HEK293T (cell line): ENCODE measurements at regions of chr1 and their contacts with region 1.

Region 1: DNA sequence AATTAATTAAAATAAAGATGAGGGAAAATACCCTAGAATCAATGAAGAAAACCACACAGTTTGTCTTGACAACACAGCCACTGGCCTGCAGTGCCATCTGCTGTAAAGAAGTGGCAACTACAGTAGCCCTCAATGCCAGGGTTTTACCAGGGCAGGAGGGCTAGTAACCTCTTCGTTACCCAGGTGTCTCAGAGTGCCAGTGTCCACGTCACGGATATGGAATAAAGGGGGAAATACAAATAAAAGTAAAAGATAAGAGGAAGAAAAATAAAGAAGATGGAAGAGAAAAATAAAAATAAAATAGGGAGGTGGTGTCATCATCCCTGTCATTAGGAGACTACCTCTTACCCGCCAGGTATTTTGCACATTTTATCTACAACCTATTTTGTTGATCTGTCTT is 14.2 kb upstream of the SLC44A3 start:
- DNase-seq: peak; percentile 69

Region 2: GRCh38 chr1:94481473-94481933 is 324.4 kb before region 1 on chr1:
- CTCF ChIA-PET with region 1: interaction called, 13 read pairs
- POLR2A ChIA-PET with region 1: no interaction called
- DNase-seq: peak; percentile 80

Region 3: DNA sequence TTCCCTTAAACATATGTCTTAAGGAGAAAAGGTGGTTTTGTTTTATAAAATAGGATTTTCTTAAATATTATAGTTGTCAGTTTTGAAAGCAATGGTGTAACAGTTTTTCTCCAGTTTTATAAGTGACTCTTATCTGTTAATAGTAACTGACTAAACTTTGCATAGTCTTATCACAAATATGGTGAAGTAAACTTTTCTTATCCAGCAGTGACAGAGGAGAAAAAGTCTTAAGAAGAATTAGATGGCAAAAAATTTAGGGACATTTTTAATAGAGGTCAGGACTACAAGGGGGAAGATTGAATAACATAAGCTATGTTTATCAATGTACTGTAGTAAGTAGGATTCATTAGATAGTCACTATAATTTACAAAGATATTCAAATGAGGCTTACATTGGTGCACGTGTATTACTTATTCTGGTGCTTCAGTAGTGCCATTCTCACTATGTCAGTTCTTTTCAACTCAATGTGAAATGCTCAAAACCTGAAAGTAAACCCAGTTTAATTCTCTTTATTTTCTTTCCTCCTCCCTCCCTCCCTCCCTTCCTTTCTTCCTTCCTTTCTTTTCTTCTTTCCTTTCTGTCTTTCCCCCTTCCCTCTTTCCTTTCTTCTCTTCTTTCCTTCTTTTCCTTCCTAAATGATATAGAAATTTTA is 290.5 kb before region 1 on chr1:
- CTCF ChIA-PET with region 1: interaction called, 10 read pairs
- POLR2A ChIA-PET with region 1: no interaction called
- DNase-seq: no peak